ENCODE measurements at regions of chr21 and their contacts with region 1.

Region 1: DNA sequence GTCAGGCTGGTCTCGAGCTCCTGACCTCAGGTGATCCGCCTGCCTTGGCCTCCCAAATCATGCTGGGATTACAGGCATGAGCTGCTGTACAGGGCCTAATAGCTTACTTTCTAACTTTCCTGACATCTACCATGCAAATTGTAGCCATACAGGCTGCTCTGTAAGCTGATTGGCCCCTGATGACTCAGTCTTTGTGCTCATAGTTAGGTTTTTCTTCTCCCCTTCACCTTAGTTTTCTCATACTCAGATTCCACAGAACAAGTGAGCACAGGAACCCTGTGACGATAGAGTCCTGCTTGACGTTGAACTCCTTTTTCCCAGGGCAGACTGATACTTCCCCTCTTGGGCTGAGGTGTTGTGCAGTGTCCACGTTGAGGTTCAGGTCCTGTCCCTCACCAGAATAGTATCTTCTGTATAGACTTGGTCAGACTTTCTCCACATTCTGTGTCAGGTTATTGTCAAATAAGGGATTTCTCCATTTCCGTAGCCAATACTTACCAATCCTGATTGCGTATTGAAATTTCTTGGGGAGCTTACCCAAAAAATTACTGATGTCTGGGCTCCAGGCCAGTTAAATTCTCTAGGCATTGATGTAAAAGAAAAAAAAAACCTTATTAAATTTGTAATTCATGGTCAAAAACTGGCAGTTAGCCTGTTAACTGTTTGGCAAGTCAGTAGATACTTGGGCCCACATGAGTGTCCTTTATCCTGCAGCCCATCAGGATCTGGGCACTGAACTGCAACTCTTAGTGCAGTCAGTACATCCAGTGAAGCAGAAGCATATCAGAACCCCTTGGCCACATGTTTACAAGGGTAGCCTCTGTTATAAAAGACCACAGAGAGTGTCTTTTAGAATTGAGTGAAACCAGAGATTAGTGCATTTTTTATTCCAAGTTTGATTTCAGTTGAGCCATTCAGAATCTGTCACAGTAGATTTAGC is 118.2 kb downstream of the DYRK1A start:
- DNase-seq: no peak
- H3K4me3 ChIP-seq: no peak overlapping the region
- H3K27ac ChIP-seq: no peak overlapping the region
- H3K4me1 ChIP-seq: peaks cover 4 to 22% (median 13%) of the 10 kb centered on the region in 4 donors
- H3K27me3 ChIP-seq: no peaks in the 10 kb centered on the region
- CTCF ChIP-seq: no peak
- EP300 ChIP-seq: no peak
- POLR2A ChIP-seq: no peak

Region 2: DNA sequence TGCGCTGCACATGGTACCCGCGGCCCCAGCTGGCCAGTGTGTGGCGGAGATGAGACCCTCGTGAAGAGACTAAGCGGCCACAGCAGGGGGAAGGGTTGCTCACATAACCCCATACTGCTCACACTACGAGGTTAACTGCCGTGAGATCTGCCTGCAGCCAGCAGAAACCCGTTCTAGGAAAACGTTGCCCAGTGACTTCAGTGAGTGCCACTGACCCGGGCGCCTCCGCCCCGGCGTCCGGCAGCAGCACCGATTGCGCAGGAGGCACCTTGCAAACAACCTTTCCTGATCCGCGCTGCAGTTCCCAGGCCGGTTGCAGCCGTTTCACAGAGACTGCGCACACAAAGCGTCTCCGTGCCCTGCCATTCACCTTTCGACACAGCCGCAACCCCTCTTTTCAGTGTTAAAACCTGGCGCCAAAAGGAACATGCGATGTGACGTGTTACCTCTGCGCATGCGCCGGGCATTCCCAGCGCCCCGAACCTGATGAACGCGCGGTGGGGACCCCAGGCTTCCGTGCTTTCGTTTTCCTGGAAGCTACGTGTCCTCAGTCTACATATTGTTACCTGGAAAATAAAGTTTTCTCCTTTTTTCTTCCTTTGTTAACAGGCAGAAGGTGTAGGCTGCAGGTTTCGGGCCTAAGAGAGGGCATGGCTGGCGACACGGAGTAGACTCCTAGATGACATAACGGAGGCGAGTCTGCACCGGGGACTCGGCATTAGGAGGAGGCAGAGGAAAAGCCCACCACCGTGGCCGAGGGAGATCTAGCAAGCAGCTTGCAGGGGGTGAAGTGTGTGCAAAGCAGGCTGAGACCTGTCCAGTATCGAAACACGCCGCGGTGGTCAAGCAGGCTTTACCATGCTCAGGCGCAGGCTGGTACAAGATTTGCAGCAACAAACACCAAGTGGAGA is 226.6 kb before region 1 on chr21:
- intact Hi-C with region 1: loop called (anchors 10 kb)
- DNase-seq: peak; percentile 92
- H3K4me3 ChIP-seq: peak overlapping the region; percentile 61 to 66 (median 63)
- H3K27ac ChIP-seq: peak overlapping the region; percentile 67 to 85 (median 74)
- H3K4me1 ChIP-seq: peaks cover 9 to 56% (median 37%) of the 10 kb centered on the region in 4 donors
- H3K27me3 ChIP-seq: no peaks in the 10 kb centered on the region
- CTCF ChIP-seq: no peak
- EP300 ChIP-seq: no peak
- POLR2A ChIP-seq: no peak

Region 3: DNA sequence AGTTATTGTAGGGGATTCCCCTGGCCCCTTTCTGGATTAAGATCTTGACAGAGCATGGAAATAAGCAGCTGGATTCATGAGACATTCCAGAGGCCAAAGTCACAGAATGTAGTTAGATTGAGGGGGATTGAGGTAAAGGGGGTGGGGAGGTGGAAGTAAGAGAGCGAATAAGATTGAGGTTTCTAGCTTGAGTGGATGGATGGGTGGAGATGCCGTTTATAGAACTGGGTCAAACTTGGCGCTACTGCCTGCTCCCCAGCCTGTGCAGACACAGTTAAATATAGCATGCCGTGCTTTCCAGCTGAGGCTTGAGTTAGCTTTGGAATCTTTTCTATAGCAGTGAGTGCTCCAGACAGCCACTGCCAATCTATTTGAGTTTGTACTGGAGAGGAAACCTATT is 32.6 kb before region 1 on chr21:
- intact Hi-C with region 1: no loop called
- DNase-seq: no peak
- H3K4me3 ChIP-seq: no peak overlapping the region
- H3K27ac ChIP-seq: peak overlapping the region; percentile 33 to 62 (median 42)
- H3K4me1 ChIP-seq: peaks cover 76 to 90% (median 82%) of the 10 kb centered on the region in 4 donors
- H3K27me3 ChIP-seq: no peaks in the 10 kb centered on the region
- CTCF ChIP-seq: no peak
- EP300 ChIP-seq: no peak
- POLR2A ChIP-seq: no peak

Measured in esophagus muscularis mucosa (tissue), 4 donors.